H1 (cell line): ENCODE measurements at regions of chr4 and their contacts with region 1.

Region 1: DNA sequence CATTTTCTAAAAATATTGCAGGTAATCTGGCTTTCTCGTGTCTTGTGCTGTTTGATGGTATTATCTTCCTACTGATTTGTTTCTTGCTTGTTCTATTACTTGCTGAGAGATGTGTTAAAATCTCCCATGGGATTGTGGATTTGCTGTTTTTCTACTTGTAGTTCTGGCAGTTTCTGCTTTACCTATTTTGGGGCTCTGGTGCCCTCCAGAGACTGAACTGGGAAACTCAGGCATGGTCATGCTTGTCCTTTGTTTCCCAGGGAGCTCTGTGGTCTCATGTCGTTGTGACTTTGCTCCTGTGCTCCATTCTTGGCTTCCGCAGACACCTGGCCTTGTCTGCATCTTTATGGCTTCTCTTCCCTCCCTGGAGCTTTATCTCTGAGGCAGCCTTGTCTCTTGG is 39.5 kb downstream of the NSD2 start:
- DNase-seq: peak; percentile 21 to 64
- H3K4me3 ChIP-seq: no peak overlapping the region
- H3K27ac ChIP-seq: peak overlapping the region; percentile 24; the same call in 1 of the 2 replicates
- H3K4me1 ChIP-seq: no peaks in the 10 kb centered on the region
- H3K27me3 ChIP-seq: no peaks in the 10 kb centered on the region
- CTCF ChIP-seq: peak; percentile 51 to 78 (median 68)
- EP300 ChIP-seq: no peak
- POLR2A ChIP-seq: no peak
- RAD21 ChIP-seq: peak; percentile 75

Region 2: GRCh38 chr4:1740021-1740545 is 170.6 kb before region 1 on chr4:
- CTCF ChIA-PET with region 1: no interaction called
- POLR2A ChIA-PET with region 1: no interaction called
- DNase-seq: no peak
- H3K4me3 ChIP-seq: no peak overlapping the region
- H3K27ac ChIP-seq: no peak overlapping the region
- H3K4me1 ChIP-seq: no peaks in the 10 kb centered on the region
- H3K27me3 ChIP-seq: no peaks in the 10 kb centered on the region
- CTCF ChIP-seq: no peak
- EP300 ChIP-seq: no peak
- POLR2A ChIP-seq: no peak
- RAD21 ChIP-seq: no peak

Region 3: DNA sequence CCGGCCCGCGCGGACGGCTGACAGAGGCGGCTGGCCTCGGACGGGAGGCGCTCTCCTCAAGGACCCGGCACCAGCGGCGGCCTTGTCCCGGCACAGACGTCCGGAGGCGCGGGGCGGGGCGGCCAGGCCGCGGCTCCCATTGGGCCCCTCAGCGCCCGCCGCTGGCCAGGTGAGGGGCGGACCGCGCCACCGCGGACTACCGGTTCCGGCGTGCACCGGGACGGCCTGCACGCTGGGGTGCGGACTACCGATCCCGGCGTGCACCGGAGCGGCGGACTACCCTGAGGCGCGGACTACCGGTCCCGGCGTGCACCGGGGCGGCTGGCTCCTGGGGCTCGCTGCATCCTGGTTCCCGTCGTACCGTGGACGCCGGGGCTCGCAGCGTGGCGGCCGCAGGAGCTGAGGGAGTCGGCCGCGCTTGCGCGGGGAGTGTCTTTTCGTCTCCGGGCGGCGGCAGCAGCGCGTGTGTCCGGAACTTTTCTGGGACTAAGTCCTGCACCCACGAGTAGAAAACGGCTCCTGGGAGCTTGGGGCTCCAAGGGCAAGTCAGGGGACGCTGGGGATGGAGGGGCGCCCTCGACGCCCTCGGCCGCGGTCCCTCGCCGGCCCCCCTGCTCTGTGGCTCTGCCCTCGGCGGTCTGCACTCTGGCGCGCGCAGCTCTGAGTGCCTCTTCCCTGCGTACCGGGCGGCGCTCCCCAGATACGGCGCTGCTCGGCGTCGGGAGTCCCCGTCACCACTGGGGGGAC is 54.4 kb before region 1 on chr4 and contains the start of gene LETM1:
- CTCF ChIA-PET with region 1: interaction called, 18 read pairs
- POLR2A ChIA-PET with region 1: interaction called, 6 read pairs
- DNase-seq: peak; percentile 72 to 92
- H3K4me3 ChIP-seq: peak within 1 kb of the TSS; percentile 62 to 79 (median 72)
- H3K27ac ChIP-seq: no peak within 1 kb of the TSS; the same call in 1 of the 2 replicates
- H3K4me1 ChIP-seq: peaks cover 0 to 14% (median 7%) of the 10 kb centered on the region in 4 experiments; a peak in 5 of 7 replicates
- H3K27me3 ChIP-seq: peaks cover 32 to 51% (median 47%) of the 10 kb centered on the region in 4 experiments
- CTCF ChIP-seq: peak in 1 of 3 experiments; percentile 5; a peak in 1 of 4 replicates
- EP300 ChIP-seq: no peak
- POLR2A ChIP-seq: peak in 1 of 2 experiments; percentile 59; a peak in 1 of 3 replicates
- RAD21 ChIP-seq: no peak
- total RNA-seq, gene LETM1: 50.1 and 53.1 TPM in 2 replicates

Region 4: GRCh38 chr4:1922821-1923220 is 12.2 kb after region 1 on chr4:
- CTCF ChIA-PET with region 1: interaction called, 22 read pairs
- POLR2A ChIA-PET with region 1: interaction called, 3 read pairs
- DNase-seq: no peak
- H3K4me3 ChIP-seq: no peak overlapping the region
- H3K27ac ChIP-seq: no peak overlapping the region
- H3K4me1 ChIP-seq: no peaks in the 10 kb centered on the region
- H3K27me3 ChIP-seq: no peaks in the 10 kb centered on the region
- CTCF ChIP-seq: no peak
- EP300 ChIP-seq: no peak
- POLR2A ChIP-seq: no peak
- RAD21 ChIP-seq: no peak

Region 5: GRCh38 chr4:1928356-1929239 is 18.0 kb after region 1 on chr4:
- CTCF ChIA-PET with region 1: interaction called, 10 read pairs
- POLR2A ChIA-PET with region 1: interaction called, 3 read pairs
- DNase-seq: no peak
- H3K4me3 ChIP-seq: no peak overlapping the region
- H3K27ac ChIP-seq: no peak overlapping the region
- H3K4me1 ChIP-seq: no peaks in the 10 kb centered on the region
- H3K27me3 ChIP-seq: no peaks in the 10 kb centered on the region
- CTCF ChIP-seq: no peak
- EP300 ChIP-seq: no peak
- POLR2A ChIP-seq: no peak
- RAD21 ChIP-seq: no peak

Region 6: DNA sequence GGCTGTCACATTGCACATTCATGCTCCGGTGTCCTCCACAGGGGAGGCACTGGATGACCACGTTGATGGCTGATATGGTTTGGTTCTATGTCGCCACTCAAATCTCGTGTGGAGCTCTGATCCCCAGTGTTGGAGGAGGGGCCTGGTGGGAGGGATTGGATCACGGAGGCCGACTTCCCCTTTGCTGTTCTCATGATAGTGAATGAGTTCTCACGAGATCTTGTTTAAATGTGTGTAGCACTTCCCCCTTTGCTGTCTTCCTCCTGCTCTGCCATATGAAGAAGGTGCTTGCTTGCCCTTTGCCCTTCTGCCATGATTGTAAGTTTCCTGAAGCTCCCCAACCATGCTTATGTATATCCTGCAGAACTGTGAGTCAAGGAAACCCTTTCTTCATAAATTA is 126.2 kb after region 1 on chr4:
- CTCF ChIA-PET with region 1: no interaction called
- POLR2A ChIA-PET with region 1: no interaction called
- DNase-seq: no peak
- H3K4me3 ChIP-seq: no peak overlapping the region
- H3K27ac ChIP-seq: no peak overlapping the region
- H3K4me1 ChIP-seq: peaks cover 0 to 3% (median 0%) of the 10 kb centered on the region in 4 experiments; a peak in 1 of 7 replicates
- H3K27me3 ChIP-seq: peaks cover 14 to 34% (median 29%) of the 10 kb centered on the region in 4 experiments
- CTCF ChIP-seq: no peak
- EP300 ChIP-seq: no peak
- POLR2A ChIP-seq: no peak
- RAD21 ChIP-seq: no peak